ENCODE measurements at regions of chr12 and their contacts with region 1.

Region 1: GRCh38 chr12:27821259-27821973 is 41.4 kb upstream of the MANSC4 start:
- DNase-seq: peak; percentile 89
- H3K4me3 ChIP-seq: peak overlapping the region in 1 of 3 experiments; percentile 6
- H3K27ac ChIP-seq: peak overlapping the region; percentile 99
- H3K4me1 ChIP-seq: peaks cover 24% of the 10 kb centered on the region
- H3K27me3 ChIP-seq: no peaks in the 10 kb centered on the region
- CTCF ChIP-seq: peak; percentile 60 to 66
- POLR2A ChIP-seq: no peak

Region 2: DNA sequence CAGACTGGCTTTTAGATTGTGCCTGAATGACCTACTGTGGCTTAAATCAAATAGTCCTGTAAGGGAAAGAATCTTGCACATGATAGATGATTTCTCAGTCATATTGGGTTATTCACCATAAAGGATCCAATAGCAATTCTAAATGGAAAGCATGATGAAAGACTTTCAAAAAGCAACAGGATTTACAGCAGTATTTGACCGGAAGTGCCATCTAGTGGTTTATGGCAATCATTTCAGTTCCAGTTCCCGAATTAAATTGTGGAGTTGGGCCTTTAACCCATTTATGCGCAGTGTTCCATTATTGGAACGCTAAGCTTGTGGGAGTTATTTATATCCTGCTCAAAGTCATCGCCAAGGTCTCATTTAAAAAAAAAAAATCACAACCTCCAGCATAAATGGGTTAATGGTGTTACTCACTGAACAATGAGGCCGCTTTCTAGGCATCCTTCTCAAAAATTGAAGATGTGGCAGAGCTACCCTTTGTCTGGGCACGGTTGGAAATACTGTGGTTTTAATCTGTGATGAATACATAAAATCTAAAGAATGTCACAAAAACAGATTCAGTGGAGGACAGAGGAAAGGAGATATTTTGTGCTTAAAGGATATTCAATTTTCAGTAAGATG is 186.0 kb before region 1 on chr12:
- CTCF ChIA-PET with region 1: no interaction called
- POLR2A ChIA-PET with region 1: no interaction called
- dilution Hi-C with region 1: no loop called
- intact Hi-C with region 1: no loop called
- DNase-seq: peak; percentile 61
- H3K4me3 ChIP-seq: no peak overlapping the region
- H3K27ac ChIP-seq: no peak overlapping the region
- H3K4me1 ChIP-seq: peaks cover 19% of the 10 kb centered on the region
- H3K27me3 ChIP-seq: no peaks in the 10 kb centered on the region
- CTCF ChIP-seq: peak; percentile 28 to 39
- POLR2A ChIP-seq: no peak

Region 3: DNA sequence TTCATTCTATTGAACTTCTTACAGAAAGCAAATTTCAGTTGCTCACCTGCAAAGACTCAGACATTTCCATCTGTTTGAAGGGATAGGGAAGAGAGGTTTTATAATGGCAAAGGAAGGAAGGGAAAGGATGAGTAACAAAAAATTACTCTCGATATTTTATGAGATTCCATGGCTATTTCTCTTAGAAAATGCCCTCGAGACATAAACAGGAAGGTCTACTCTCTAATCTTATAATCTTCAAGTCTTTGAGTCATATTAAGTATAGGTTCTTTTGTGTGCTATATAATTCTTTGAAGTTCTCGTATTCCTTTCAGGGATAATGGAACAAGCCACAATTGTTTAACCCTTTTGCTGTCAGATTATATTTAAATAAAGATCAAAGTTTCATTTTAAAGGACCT is 48.8 kb before region 1 on chr12:
- CTCF ChIA-PET with region 1: interaction called, 5 read pairs
- POLR2A ChIA-PET with region 1: no interaction called
- dilution Hi-C with region 1: no loop called
- intact Hi-C with region 1: loop called (anchors 2 kb)
- DNase-seq: peak; percentile 56
- H3K4me3 ChIP-seq: no peak overlapping the region
- H3K27ac ChIP-seq: peak overlapping the region; percentile 63
- H3K4me1 ChIP-seq: peaks cover 26% of the 10 kb centered on the region
- H3K27me3 ChIP-seq: no peaks in the 10 kb centered on the region
- CTCF ChIP-seq: no peak
- POLR2A ChIP-seq: no peak

Region 4: GRCh38 chr12:27805238-27805637 is 16.2 kb before region 1 on chr12:
- CTCF ChIA-PET with region 1: interaction called, 17 read pairs
- POLR2A ChIA-PET with region 1: interaction called, 3 read pairs
- dilution Hi-C with region 1: no loop called
- intact Hi-C with region 1: no loop called
- DNase-seq: peak; percentile 24
- H3K4me3 ChIP-seq: no peak overlapping the region
- H3K27ac ChIP-seq: no peak overlapping the region
- H3K4me1 ChIP-seq: no peaks in the 10 kb centered on the region
- H3K27me3 ChIP-seq: peaks cover 0 to 3% of the 10 kb centered on the region in 2 experiments
- CTCF ChIP-seq: no peak
- POLR2A ChIP-seq: no peak

Region 5: DNA sequence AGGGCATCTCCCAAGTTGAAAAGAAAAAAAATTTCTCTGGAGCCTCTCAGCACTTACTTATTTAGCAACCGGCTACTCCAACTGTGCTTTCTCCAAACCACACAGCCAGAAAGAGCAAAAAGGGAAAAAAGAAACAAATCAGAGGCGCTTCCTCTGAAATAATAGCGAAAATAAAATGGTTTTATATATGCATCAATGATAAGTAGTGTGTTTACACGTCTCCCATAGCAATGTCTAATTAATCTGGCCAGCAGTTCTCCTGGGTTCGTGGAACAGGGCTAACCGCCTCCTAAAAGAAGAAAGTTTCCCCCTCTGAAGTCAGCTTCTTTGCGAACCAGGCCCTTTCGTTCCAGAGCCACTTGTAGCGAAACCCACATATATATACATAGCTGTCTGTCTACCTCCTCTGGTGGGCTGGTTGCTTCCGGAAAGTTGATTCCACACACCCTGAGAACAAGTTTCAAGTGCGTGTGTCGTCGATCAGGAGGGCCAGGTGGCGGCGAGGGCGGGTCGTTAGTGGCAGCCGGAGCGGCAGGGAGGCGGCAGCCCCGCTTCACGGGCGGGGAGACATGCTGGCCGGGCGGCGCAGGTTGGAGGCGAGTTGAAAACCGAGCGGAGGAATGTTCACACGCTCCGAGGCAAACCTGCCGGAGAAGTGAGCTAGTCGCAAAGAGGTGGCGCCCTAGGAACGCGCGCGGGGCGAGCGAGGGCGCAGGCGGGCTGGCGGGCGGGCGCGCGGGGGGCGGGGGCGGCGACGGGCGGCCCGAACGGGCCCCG is 148.4 kb after region 1 on chr12:
- CTCF ChIA-PET with region 1: no interaction called
- POLR2A ChIA-PET with region 1: no interaction called
- dilution Hi-C with region 1: no loop called
- intact Hi-C with region 1: loop called (anchors 1 kb)
- DNase-seq: peak; percentile 66
- H3K4me3 ChIP-seq: peak overlapping the region; percentile 49 to 88 (median 70)
- H3K27ac ChIP-seq: peak overlapping the region; percentile 2
- H3K4me1 ChIP-seq: peaks cover 52% of the 10 kb centered on the region
- H3K27me3 ChIP-seq: no peaks in the 10 kb centered on the region
- CTCF ChIP-seq: peak in 1 of 2 donors; percentile 8
- POLR2A ChIP-seq: no peak

Region 6: DNA sequence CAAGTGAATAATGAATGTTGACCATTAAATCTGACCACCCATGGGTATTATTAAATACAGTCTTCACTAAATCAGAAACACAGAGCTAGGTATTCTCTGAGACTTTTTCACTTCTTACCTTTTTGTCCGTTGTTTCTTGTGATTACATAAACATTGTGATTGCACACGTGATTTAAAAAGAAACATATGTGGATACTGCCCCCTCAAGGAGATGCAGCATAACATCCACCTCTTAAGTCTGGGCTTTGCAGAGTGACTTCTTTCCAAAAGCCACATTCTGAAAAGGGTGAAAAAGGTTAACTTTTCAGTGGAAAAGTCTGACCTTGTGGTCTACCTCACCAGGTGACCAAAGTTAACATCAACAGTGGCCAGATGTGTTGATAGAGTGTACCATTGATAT is 1142.1 kb after region 1 on chr12:
- CTCF ChIA-PET with region 1: no interaction called
- POLR2A ChIA-PET with region 1: no interaction called
- dilution Hi-C with region 1: no loop called
- intact Hi-C with region 1: loop called (anchors 5 kb)
- DNase-seq: peak; percentile 69
- H3K4me3 ChIP-seq: no peak overlapping the region
- H3K27ac ChIP-seq: no peak overlapping the region
- H3K4me1 ChIP-seq: peaks cover 39% of the 10 kb centered on the region
- H3K27me3 ChIP-seq: no peaks in the 10 kb centered on the region
- CTCF ChIP-seq: peak; percentile 48 to 51
- POLR2A ChIP-seq: no peak

Measured in endothelial cell of umbilical vein (primary cell).